ENCODE measurements at regions of chr4 and their contacts with region 1.

Region 1: DNA sequence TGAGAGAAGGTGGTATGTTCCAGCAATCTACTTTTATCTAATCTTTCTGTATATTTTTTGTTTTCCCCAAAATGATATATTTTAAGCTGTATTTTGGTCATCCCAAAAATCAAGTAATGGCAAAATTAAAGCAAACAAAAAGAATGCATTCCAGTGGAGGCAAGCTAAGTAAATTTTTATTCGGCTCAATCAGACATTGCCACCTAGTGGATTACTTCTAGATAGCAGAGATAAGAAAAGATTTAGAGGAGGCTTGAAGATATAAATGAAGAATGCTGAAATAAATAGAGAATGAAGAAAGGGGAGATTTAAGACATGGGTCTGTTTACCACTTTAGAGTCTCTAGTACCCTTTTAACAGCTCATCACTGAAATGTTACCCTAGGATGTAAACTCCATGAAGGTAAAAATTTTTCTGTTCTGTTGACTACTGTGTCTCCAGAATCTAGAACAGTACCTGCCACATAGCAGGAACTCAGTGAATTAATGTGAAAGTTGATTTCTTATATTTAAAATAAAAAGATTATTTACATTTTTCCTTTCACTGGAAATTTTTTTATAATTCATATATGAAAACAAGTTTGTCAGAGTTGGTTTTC is 110.9 kb upstream of the ANK2 start:
- H3K4me3 ChIP-seq: no peak overlapping the region
- H3K27ac ChIP-seq: no peak overlapping the region
- H3K4me1 ChIP-seq: peaks cover 3% of the 10 kb centered on the region; the same call in 1 of the 2 replicates
- CTCF ChIP-seq: no peak

Region 2: DNA sequence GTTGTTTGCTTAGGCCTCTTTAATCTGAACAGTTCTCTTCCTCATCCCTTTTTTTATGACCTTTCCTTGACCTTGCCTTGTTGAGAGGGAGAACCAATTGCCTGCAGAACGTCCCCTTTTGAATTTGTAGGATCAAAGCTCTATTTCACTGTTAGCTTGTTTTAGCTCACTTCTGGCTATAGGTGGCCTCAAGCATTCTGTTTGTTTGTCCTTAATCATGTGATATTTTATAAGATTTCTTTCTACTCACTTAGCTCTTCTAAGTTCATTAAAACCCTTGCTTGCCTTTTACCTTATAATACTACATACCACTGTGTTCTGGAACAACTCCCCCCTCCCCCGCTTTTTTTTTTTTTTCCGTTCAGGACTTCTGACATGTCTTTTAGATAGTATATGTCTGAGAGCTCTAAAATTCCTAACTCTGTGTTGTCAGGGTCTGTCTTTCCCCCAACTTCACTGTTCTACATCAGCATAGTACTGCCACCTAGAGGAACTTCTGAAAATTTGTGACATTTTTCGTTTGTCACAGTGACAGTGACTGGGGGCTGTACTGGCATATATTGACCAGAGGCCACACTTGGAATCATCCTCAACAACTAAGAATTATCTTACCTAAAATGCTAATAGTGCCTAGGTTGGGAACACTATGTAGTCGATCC is 173.1 kb before region 1 on chr4:
- CTCF ChIA-PET with region 1: interaction called, 56 read pairs
- POLR2A ChIA-PET with region 1: no interaction called
- H3K4me3 ChIP-seq: no peak overlapping the region
- H3K27ac ChIP-seq: no peak overlapping the region
- H3K4me1 ChIP-seq: 0 out of 2 replicates have a peak, but pooled peaks cover 2% of the 10 kb centered on the region
- CTCF ChIP-seq: no peak

Region 3: DNA sequence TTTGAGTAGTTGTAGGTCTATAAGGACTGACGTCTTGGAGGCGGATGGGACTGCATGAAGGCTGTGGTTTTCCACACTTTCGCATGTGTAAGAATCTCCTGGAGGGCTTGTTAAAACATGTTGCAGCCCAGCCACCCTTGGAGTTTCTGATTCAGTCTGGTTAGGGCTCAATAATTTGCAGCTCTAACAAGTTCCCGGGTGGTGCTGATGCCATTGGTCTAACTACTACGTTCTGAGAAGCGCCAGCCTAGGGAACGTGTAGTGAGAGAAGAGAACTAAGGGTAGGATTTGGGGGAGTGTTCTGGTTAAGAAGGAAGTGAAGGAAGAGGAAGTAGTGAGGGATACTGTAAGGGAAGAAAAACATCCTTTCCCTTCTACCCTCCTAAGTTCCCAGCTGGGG is 162.8 kb before region 1 on chr4:
- CTCF ChIA-PET with region 1: interaction called, 10 read pairs
- POLR2A ChIA-PET with region 1: no interaction called
- H3K4me3 ChIP-seq: no peak overlapping the region
- H3K27ac ChIP-seq: no peak overlapping the region
- H3K4me1 ChIP-seq: no peaks in the 10 kb centered on the region
- CTCF ChIP-seq: no peak

Region 4: DNA sequence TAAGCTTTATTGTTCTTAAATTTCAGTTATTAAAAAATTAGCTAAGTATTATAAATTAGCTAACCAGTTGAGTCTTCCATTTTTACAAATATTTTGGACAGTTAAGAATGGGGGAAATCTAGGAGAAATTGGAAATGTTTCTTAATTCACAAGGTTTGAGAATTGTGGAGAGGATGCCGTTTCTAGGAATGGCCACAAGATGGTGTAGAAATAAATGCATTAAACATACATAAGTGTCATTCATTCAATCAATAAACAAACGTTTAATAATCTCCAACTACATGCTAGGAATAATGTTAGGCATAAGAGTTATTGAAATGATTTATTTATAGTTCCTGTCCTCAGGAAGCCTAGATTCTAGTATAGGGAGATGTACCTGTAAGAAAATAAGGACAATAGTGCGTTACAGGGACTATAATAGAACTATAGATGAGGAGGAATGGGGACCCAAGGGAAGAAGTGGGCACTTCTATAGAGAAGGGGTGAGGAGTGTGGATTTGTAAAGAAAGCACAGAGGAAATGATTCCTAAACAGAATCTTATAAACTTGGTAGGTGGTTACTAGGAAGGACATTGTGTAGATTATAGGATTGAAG is 84.8 kb before region 1 on chr4:
- CTCF ChIA-PET with region 1: interaction called, 19 read pairs
- POLR2A ChIA-PET with region 1: no interaction called
- H3K4me3 ChIP-seq: no peak overlapping the region
- H3K27ac ChIP-seq: no peak overlapping the region
- H3K4me1 ChIP-seq: 0 out of 2 replicates have a peak, but pooled peaks cover 2% of the 10 kb centered on the region
- CTCF ChIP-seq: no peak

Region 5: DNA sequence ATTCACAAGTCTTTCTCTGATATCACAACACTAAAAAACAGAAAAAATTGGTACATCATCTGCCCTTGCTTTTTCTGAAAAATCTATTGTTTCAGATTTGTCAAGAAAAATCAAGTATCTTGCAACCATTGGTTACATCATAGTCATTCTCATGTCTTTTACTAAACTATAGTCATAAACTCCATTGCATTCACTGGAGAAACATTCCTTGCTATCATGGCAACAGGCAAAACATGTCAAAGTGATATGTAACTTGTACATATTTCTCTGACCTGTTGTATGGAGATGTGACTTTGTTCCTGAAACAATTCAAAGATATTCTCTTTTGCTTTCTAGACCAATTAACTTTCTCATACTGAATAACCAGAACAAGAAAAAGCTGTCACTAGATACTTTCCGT is 11.0 kb before region 1 on chr4:
- CTCF ChIA-PET with region 1: interaction called, 11 read pairs
- POLR2A ChIA-PET with region 1: no interaction called
- H3K4me3 ChIP-seq: no peak overlapping the region
- H3K27ac ChIP-seq: no peak overlapping the region
- H3K4me1 ChIP-seq: no peaks in the 10 kb centered on the region
- CTCF ChIP-seq: no peak

Region 6: DNA sequence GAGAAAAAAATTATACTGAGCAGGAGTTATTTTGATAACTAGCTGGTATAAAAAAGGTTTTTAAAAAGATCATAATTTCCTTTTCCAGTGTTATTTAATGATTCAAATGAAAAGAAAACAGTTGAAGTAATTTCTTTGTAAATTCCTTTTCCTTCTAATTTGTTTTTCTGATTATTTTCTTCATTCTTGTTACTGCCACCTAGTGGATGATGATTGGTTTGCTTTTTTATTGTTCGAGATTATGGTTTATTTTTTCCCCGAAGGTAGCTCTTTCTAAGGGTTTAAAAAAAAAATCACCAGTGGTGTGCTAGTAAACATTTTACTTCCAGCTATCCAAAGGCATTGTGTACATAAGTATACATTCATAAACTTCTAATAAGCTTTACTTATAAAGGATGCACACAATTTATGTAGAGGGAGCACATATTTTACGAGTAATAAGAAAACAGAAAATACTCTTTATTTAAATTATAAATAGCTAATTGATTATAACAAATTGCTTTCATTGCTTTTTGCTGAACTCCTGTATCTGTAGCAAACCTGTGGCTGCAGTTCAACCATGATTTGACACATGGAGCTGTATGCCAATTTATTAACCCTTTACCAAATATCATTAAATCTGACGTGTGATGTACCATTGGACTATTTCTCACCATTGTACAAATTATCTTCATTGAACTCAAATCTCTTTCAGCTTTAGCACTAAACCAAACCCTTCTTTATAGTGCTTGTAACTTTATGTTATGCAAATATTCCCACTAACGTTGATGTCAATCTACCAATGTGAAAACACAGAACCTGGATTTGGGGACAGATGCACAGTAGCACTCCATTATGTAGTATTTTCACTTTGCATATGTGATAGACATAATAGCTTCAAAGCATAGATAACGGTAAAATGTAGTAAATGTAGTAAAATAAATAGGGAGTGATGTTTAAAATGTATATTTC is 13.1 kb after region 1 on chr4:
- CTCF ChIA-PET with region 1: interaction called, 27 read pairs
- POLR2A ChIA-PET with region 1: no interaction called
- H3K4me3 ChIP-seq: no peak overlapping the region
- H3K27ac ChIP-seq: no peak overlapping the region
- H3K4me1 ChIP-seq: no peaks in the 10 kb centered on the region
- CTCF ChIP-seq: no peak